Body of pancreas (tissue), 4 donors: ENCODE measurements at regions of chr10 and their contacts with region 1.

Region 1: GRCh38 chr10:100562008-100562711 is 26.4 kb downstream of the HIF1AN start:
- DNase-seq: peak; percentile 73 to 84 (median 80)
- ATAC-seq: peak; percentile 96
- H3K4me3 ChIP-seq: no peak overlapping the region
- H3K27ac ChIP-seq: no peak overlapping the region
- H3K4me1 ChIP-seq: peaks cover 14% of the 10 kb centered on the region
- H3K27me3 ChIP-seq: peaks cover 0 to 5% of the 10 kb centered on the region in 2 donors
- CTCF ChIP-seq: peak; percentile 95 to 99 (median 96)
- POLR2A ChIP-seq: no peak

Region 2: GRCh38 chr10:100743626-100744135 is 181.5 kb after region 1 on chr10:
- intact Hi-C with region 1: loop called (anchors 10 kb)
- DNase-seq: peak; percentile 66 to 72 (median 68)
- ATAC-seq: peak; percentile 63
- H3K4me3 ChIP-seq: no peak overlapping the region
- H3K27ac ChIP-seq: no peak overlapping the region
- H3K4me1 ChIP-seq: peaks cover 60% of the 10 kb centered on the region
- H3K27me3 ChIP-seq: peaks cover 4 to 85% of the 10 kb centered on the region in 2 donors
- CTCF ChIP-seq: peak; percentile 53 to 75 (median 65)
- POLR2A ChIP-seq: no peak

Region 3: DNA sequence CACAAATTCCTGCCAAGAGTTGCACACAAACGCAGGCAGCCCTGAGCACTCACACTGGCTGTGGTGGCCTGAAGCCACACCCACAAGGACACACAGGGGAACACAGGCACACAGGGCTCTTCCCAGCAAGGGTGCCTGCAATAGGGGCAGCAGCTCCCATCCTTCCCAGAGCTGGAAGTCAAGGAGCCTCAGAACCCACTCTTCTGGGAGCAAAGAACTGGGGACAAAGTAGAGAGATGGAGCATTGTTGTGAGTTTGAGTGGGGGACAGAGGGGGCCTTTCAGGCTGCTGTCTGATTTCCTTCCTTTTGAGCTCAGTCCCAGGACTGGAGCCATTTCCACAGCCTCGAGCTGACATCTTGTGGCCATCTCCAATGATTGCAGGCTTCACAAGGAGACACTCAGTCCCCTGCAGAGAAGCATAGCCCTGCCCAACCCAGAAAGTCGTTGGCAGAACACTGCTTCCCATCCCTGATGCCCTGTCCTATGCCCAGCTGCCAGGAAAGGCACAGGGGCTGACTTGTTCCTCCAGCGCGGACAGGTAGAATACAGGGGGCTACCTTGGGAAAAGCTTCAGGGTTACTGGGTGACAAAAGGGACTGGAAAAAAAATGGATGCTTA is 316.2 kb after region 1 on chr10:
- intact Hi-C with region 1: loop called (anchors 10 kb)
- DNase-seq: peak; percentile 37 to 48 (median 46)
- ATAC-seq: peak; percentile 74
- H3K4me3 ChIP-seq: no peak overlapping the region
- H3K27ac ChIP-seq: no peak overlapping the region
- H3K4me1 ChIP-seq: no peaks in the 10 kb centered on the region
- H3K27me3 ChIP-seq: no peaks in the 10 kb centered on the region
- CTCF ChIP-seq: peak in 6 of 7 experiments; percentile 26 to 60 (median 54)
- POLR2A ChIP-seq: no peak